ENCODE measurements at regions of chr17 and their contacts with region 1.

Region 1: GRCh38 chr17:38898812-38899348 is 26.5 kb upstream of the LASP1NB start:
- DNase-seq: peak; percentile 96
- H3K4me3 Mint-ChIP-seq: peak overlapping the region; percentile 67
- H3K27ac Mint-ChIP-seq: peak overlapping the region; percentile 95
- H3K4me1 Mint-ChIP-seq: peaks cover 54% of the 10 kb centered on the region
- H3K27me3 Mint-ChIP-seq: no peaks in the 10 kb centered on the region

Region 2: DNA sequence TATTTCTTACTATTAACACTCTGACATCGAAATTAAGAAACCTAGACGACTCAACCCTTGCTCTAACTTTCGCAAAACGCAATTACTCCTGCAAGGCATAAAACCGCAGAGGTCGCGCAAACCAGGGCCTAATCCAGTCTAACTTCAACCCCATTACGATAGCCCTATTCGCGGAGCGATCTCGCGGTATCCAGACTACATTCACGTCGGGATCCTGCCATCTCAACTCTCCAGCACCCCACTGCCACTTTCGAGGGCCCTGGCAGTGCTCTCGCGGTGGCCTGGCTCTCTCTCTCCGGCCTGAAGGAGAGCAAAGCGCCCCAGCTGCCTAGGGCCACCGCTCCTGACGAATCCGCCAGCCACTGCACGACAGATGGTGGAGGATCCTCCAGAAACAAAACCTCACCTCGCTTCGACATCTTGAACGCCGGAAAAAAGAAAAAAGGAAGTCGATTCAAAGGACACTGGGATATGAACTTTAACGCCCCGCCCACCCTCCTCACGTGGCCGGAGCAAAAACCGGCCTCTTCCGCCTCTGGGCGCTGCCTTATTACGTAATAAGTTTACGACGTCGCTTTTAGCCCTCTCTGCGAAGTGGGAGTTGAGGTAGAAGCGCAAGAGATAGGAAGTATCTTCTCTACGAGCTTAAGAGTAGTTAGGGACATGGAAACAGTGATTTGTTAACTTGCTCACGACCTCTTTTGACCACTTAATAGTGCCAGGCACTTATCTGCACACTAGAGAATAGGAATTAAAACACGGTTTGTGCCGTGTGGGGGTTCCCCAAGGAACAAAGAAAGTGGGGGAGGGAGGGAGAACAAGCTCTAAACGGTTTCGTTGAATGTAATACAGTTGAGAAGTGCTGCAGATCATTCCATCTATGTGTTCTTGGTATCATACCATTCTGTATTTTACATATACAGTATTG is 45.3 kb before region 1 on chr17 and contains the start of gene RPL23:
- CTCF ChIA-PET with region 1: interaction called, 4 read pairs
- intact Hi-C with region 1: loop called (anchors 2 kb)
- DNase-seq: peak; percentile 95
- H3K4me3 Mint-ChIP-seq: peak within 1 kb of the TSS; percentile 96
- H3K27ac Mint-ChIP-seq: peak within 1 kb of the TSS; percentile 99
- H3K4me1 Mint-ChIP-seq: peaks cover 43% of the 10 kb centered on the region
- H3K27me3 Mint-ChIP-seq: no peaks in the 10 kb centered on the region
- total RNA-seq, gene RPL23: 2,241 to 2,332 TPM

Region 3: GRCh38 chr17:38879878-38880682 is 18.8 kb before region 1 on chr17:
- CTCF ChIA-PET with region 1: interaction called, 26 read pairs
- intact Hi-C with region 1: loop called (anchors 1 kb)
- DNase-seq: peak; percentile 17
- H3K4me3 Mint-ChIP-seq: no peak overlapping the region
- H3K27ac Mint-ChIP-seq: peak overlapping the region; percentile 93
- H3K4me1 Mint-ChIP-seq: peaks cover 88% of the 10 kb centered on the region
- H3K27me3 Mint-ChIP-seq: no peaks in the 10 kb centered on the region

Region 4: DNA sequence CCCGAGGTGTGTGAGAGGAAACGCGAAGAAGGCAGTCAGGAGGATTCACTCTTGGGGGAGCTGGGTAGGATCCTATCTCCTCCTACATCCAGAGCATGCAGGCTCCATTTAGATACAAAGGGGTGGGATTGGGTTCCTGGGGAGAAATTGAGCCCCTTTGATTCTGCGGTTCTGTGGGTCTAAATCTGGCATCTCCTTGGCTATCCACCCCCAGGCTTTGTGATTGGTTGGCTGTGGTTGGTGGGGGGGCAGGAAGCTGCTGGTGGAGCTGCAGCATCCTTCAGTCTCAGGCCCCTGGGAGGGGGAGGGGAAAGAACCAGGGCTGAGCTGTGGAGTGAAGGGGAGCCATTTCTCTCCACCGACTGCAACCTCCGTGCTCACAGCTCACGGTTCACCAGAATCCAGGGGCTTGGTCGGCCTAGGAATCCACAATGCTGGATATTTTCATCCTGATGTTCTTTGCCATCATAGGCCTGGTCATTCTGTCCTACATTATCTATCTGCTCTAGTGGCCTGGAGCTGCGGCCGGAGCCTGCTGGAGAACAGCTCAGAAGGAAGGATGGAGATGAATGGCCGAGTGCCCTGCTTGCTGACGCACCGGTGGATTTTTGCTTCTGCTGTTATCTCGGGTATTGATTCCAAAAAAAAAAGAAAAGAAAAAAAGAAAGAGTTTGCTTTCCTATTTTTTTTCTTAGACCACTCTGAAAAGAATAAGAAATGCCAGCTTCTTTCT is 26.5 kb after region 1 on chr17 and contains the start of gene LASP1NB:
- CTCF ChIA-PET with region 1: interaction called, 6 read pairs
- intact Hi-C with region 1: loop called (anchors 1 kb)
- DNase-seq: peak; percentile 72
- H3K4me3 Mint-ChIP-seq: no peak within 1 kb of the TSS
- H3K27ac Mint-ChIP-seq: peak within 1 kb of the TSS; percentile 46
- H3K4me1 Mint-ChIP-seq: peaks cover 36% of the 10 kb centered on the region
- H3K27me3 Mint-ChIP-seq: no peaks in the 10 kb centered on the region

Region 5: GRCh38 chr17:39057701-39058206 is 158.9 kb after region 1 on chr17:
- CTCF ChIA-PET with region 1: no interaction called
- intact Hi-C with region 1: loop called (anchors 5 kb)
- DNase-seq: no peak
- H3K4me3 Mint-ChIP-seq: peak overlapping the region; percentile 84
- H3K27ac Mint-ChIP-seq: no peak overlapping the region
- H3K4me1 Mint-ChIP-seq: peaks cover 13% of the 10 kb centered on the region
- H3K27me3 Mint-ChIP-seq: no peaks in the 10 kb centered on the region